ENCODE measurements at regions of chr18 and their contacts with region 1.

Region 1: GRCh38 chr18:67261931-67262552 is 254.5 kb downstream of the DSEL start:
- DNase-seq: no peak
- ATAC-seq: no peak
- H3K4me3 ChIP-seq: no peak overlapping the region
- H3K4me3 Mint-ChIP-seq: no peak overlapping the region
- H3K27ac ChIP-seq: no peak overlapping the region
- H3K27ac Mint-ChIP-seq: no peak overlapping the region
- H3K4me1 ChIP-seq: peaks cover 7 to 13% of the 10 kb centered on the region in 2 donors
- H3K4me1 Mint-ChIP-seq: peaks cover 15 to 35% (median 30%) of the 10 kb centered on the region in 7 donors
- H3K27me3 ChIP-seq: no peaks in the 10 kb centered on the region
- H3K27me3 Mint-ChIP-seq: no peaks in the 10 kb centered on the region

Region 2: DNA sequence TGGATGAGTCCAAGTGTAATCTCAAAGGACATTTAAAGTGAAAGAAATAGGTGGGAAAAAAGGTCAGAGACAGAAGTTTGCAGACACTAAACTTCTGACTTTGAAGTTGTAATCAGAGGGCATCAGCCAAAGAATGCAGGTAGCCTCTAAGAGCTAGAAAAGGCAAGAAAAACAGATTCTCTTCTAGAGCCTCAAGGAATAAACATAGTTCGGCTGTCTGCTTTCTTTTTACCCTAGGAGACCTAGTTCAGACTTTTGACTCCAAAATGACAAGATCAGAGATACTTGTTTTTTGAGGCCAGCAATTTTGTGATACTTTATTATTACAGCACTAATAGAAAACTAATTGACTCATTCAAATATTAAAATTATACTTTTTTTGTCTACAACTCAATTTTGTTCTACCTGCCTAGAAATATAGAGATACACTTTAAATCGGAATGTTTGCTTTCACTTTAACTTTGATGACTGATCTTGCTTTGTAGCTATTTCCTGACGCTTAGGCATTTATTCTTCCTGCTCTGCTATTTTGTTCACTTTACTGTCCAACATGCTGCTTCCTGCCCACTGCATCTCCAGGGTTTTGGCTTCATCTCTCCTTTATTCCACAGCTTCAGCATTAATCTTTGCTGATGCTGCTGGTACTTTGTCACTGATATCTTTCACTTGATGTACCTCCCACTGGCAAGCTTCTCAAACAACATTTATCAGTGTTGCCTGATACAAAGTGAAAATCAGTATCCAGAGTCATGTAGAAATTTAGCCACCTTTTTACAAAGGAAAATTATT is 18.0 kb before region 1 on chr18:
- CTCF ChIA-PET with region 1: no interaction called
- POLR2A ChIA-PET with region 1: no interaction called
- intact Hi-C with region 1: loop called in 1 of 2 experiments (anchors 1 kb)
- DNase-seq: no peak
- ATAC-seq: no peak
- H3K4me3 ChIP-seq: peak overlapping the region; percentile 22
- H3K4me3 Mint-ChIP-seq: peak overlapping the region; percentile 1 to 96 (median 82)
- H3K27ac ChIP-seq: no peak overlapping the region
- H3K27ac Mint-ChIP-seq: peak overlapping the region; percentile 13 to 91 (median 73)
- H3K4me1 ChIP-seq: peaks cover 0 to 20% of the 10 kb centered on the region in 2 donors
- H3K4me1 Mint-ChIP-seq: peaks cover 6 to 46% (median 29%) of the 10 kb centered on the region in 7 donors
- H3K27me3 ChIP-seq: no peaks in the 10 kb centered on the region
- H3K27me3 Mint-ChIP-seq: no peaks in the 10 kb centered on the region

Measured in naive thymus-derived CD4-positive, alpha-beta T cell (primary cell).